GM12878 (cell line): ENCODE measurements at regions of chr17 and their contacts with region 1.

Region 1: DNA sequence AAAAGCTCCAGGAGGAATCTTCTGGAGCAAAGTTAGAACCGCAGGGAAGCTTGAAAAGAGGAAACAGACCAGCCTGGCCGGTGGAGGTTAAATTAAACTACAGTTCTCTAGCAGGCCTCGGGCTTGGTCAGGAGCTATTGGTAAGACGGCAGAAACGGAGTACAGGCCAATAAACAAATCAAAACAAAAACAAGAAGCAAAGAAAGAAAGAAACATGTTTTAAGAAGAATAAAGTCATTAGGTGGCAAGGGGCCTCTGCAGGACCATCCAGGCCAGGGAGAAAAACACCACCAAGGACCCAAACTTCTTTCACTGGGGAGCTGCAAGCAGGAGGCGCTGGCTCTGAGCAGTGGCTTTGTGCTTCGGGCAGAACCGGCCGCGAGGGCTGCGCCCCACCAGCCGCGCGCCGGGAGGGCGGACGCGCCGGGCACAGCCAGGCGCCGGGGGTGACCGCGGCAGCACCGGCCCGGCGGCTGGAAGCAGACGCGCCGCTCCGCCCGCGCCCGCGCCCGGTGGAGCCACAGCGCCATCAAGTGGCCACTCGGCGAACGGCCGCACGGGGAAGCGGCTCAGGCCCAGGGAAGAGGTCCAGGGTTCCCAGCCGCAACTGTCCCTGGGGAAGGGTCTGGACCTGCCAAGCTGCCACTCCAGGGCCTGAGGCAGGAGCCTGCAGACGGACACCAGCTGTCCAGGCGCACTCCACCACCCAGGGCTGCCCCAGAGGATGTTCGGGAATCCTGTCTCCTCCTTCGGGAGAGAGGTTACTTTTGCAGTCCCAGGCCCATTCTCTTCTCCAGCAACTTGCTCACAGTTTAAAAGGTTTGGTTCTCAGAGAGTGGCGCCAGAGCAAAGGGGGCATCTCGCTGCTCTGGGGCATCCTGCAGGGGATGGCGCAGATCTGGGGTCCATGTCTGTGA is 419.4 kb downstream of the SOX9 start:
- DNase-seq: no peak
- ATAC-seq: peak; percentile 99
- H3K4me3 ChIP-seq: no peak overlapping the region
- H3K27ac ChIP-seq: no peak overlapping the region
- H3K4me1 ChIP-seq: peaks cover 5% of the 10 kb centered on the region
- H3K27me3 ChIP-seq: no peaks in the 10 kb centered on the region
- CTCF ChIP-seq: peak; percentile 68 to 94 (median 84)
- EP300 ChIP-seq: 0 out of 4 replicates have a peak, but pooled peaks have one; percentile 7 to 25
- POLR2A ChIP-seq: no peak
- RAD21 ChIP-seq: peak; percentile 90

Region 2: DNA sequence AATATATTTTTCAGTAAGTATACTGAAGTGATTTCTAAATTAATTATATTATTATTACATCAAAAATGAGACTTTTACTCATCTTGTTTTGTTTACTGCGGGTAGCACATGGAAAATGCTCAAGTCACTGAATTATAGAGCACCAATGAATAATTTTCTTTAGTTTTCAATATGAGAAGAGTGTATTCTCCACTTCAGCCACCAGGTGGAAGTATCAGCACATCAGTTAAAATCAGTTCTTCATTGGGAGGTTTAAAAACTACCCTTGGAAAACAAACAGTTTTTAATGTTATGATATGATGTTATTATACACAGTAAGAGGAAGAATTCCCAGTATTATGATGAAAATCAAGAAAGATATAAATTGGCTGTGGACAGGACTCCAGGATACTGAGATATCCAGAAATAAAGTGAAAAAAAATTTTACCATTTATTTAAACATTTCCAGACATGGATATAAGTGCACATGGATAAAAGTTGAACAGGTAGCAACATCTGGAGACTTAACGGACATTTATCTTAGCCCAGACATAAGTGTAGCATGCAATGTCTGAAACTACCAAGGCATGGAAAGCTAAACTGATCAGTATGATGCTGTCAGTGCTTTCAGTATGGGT is 1903.6 kb before region 1 on chr17:
- CTCF ChIA-PET with region 1: no interaction called
- POLR2A ChIA-PET with region 1: no interaction called
- RAD21 ChIA-PET with region 1: no interaction called
- SMC1A ChIA-PET with region 1: no interaction called
- in situ Hi-C with region 1: loop called (anchors 5 kb)
- intact Hi-C with region 1: loop called (anchors 5 kb)
- DNase-seq: no peak
- ATAC-seq: peak; percentile 33; the same call in 1 of the 3 replicates
- H3K4me3 ChIP-seq: no peak overlapping the region
- H3K27ac ChIP-seq: no peak overlapping the region
- H3K4me1 ChIP-seq: no peaks in the 10 kb centered on the region
- H3K27me3 ChIP-seq: no peaks in the 10 kb centered on the region
- CTCF ChIP-seq: peak; percentile 53 to 70 (median 56); a peak in 5 of 6 replicates
- EP300 ChIP-seq: no peak
- POLR2A ChIP-seq: no peak
- RAD21 ChIP-seq: peak; percentile 78

Region 3: GRCh38 chr17:71472809-71473789 is 1067.1 kb before region 1 on chr17:
- CTCF ChIA-PET with region 1: interaction called, 34 read pairs
- POLR2A ChIA-PET with region 1: no interaction called
- RAD21 ChIA-PET with region 1: interaction called, 14 read pairs
- SMC1A ChIA-PET with region 1: interaction called, 19 read pairs
- in situ Hi-C with region 1: loop called (anchors 5 kb)
- intact Hi-C with region 1: loop called (anchors 1 kb)
- DNase-seq: no peak
- ATAC-seq: peak; percentile 89
- H3K4me3 ChIP-seq: no peak overlapping the region
- H3K27ac ChIP-seq: no peak overlapping the region
- H3K4me1 ChIP-seq: no peaks in the 10 kb centered on the region
- H3K27me3 ChIP-seq: no peaks in the 10 kb centered on the region
- CTCF ChIP-seq: peak; percentile 61 to 76 (median 70); a peak in 5 of 6 replicates
- EP300 ChIP-seq: no peak
- POLR2A ChIP-seq: no peak
- RAD21 ChIP-seq: peak; percentile 84

Region 4: GRCh38 chr17:72370819-72371218 is 169.4 kb before region 1 on chr17:
- CTCF ChIA-PET with region 1: interaction called, 7 read pairs
- POLR2A ChIA-PET with region 1: interaction called, 15 read pairs
- RAD21 ChIA-PET with region 1: no interaction called
- SMC1A ChIA-PET with region 1: interaction called, 4 read pairs
- in situ Hi-C with region 1: no loop called
- intact Hi-C with region 1: no loop called
- DNase-seq: no peak
- ATAC-seq: no peak
- H3K4me3 ChIP-seq: no peak overlapping the region
- H3K27ac ChIP-seq: no peak overlapping the region
- H3K4me1 ChIP-seq: no peaks in the 10 kb centered on the region
- H3K27me3 ChIP-seq: no peaks in the 10 kb centered on the region
- CTCF ChIP-seq: no peak
- EP300 ChIP-seq: no peak
- POLR2A ChIP-seq: no peak
- RAD21 ChIP-seq: no peak

Region 5: DNA sequence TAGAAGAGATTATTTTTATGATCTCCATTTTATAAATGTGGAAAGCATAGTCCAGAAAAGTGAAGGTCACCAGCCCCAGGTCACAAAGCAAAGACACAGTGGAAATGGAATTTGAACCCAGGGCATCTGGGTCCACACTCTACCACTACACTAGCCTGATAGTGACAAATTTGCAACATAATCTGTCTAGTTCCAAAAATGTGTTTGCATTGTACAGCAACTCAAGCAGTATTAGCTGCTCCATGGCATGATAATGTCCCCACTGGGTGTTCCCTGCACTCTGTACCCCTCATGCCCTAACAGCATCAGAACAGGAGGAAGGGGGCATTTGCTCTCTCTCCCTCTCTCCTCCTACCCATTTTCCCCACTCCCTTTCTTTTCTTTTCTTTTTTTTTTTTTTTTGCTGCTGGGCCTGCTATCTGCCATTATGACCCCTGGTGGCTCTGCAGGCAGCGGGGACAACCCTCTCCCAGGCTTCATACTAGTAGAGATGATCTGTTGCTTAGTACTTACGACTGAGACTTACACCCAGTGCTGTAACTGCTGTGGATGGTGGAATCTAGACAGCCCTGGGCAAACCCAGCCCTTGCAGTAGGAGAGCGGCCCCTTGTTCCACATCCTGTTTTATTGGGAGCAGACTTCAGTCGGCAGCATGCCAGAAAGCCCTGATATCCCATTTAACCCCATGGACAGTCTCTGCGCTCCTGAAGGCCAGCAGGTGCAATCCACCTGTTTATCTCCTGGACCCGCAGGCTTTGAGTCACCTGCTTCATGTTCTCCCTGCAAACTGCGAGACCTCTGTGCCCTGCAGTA is 113.1 kb before region 1 on chr17:
- CTCF ChIA-PET with region 1: interaction called, 26 read pairs
- POLR2A ChIA-PET with region 1: interaction called, 6 read pairs
- RAD21 ChIA-PET with region 1: interaction called, 48 read pairs
- SMC1A ChIA-PET with region 1: interaction called, 75 read pairs
- in situ Hi-C with region 1: no loop called
- intact Hi-C with region 1: no loop called
- DNase-seq: no peak
- ATAC-seq: no peak
- H3K4me3 ChIP-seq: no peak overlapping the region
- H3K27ac ChIP-seq: peak overlapping the region; percentile 21; the same call in 1 of the 2 replicates
- H3K4me1 ChIP-seq: peaks cover 33% of the 10 kb centered on the region
- H3K27me3 ChIP-seq: no peaks in the 10 kb centered on the region
- CTCF ChIP-seq: no peak
- EP300 ChIP-seq: no peak
- POLR2A ChIP-seq: no peak
- RAD21 ChIP-seq: no peak; the same call in 1 of the 2 replicates

Region 6: DNA sequence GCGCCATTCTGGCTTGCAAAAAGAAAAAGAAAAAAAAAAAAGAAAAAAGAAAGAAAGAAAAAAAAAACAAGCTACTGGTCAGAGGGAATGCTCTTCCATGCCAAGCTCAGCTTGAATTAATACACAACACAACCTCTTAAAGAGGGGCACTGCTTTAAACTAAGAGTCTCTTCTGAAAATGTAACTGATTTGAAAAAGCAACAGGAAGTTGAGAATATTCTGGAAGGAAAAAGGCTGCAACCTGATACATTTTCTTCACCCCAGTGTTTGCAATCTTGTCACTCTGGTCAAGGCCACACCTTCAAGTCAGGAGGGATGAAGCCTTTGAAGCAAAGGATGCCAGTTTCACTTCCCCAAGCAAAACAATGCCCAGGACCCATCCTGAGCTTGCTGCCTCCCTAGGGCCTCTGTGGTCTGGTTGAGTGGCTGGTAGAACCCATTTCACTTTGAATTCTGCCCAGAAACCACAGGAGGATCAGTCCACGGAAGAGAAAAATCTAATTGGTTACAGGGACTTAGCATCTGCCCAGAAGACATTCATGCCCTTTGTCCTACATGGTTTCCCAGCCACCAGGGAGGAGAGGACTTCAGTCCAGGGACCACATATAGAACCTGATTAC is 29.7 kb before region 1 on chr17:
- CTCF ChIA-PET with region 1: interaction called, 23 read pairs
- POLR2A ChIA-PET with region 1: interaction called, 13 read pairs
- RAD21 ChIA-PET with region 1: interaction called, 50 read pairs
- SMC1A ChIA-PET with region 1: interaction called, 66 read pairs
- in situ Hi-C with region 1: no loop called
- intact Hi-C with region 1: no loop called
- DNase-seq: peak; percentile 92
- ATAC-seq: peak; percentile 80
- H3K4me3 ChIP-seq: no peak overlapping the region
- H3K27ac ChIP-seq: no peak overlapping the region
- H3K4me1 ChIP-seq: peaks cover 15% of the 10 kb centered on the region
- H3K27me3 ChIP-seq: no peaks in the 10 kb centered on the region
- CTCF ChIP-seq: no peak
- EP300 ChIP-seq: peak in 1 of 2 experiments; percentile 69; a peak in 1 of 4 replicates
- POLR2A ChIP-seq: no peak
- RAD21 ChIP-seq: no peak

Region 7: DNA sequence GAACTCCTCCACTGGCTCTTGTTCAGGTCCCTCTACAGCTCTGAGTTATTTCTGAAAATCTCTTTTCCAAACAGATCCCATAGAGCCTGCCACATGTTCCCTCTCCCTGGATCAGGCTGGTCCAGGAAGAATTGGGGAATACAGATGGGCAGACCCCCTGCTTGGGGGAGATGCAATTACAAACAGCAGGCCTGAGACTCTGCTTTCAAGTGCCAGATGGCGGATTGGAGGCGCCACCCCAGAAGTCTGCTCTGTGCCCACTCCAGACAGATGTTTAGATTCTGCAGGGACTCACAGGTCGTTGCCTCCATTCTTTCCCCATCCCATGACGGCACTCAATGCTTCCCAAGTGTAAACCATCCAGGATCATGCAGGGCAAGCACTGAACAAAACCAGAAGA is 235.7 kb after region 1 on chr17:
- CTCF ChIA-PET with region 1: no interaction called
- POLR2A ChIA-PET with region 1: no interaction called
- RAD21 ChIA-PET with region 1: no interaction called
- SMC1A ChIA-PET with region 1: no interaction called
- in situ Hi-C with region 1: no loop called
- intact Hi-C with region 1: no loop called
- DNase-seq: no peak
- ATAC-seq: no peak
- H3K4me3 ChIP-seq: no peak overlapping the region
- H3K27ac ChIP-seq: no peak overlapping the region
- H3K4me1 ChIP-seq: no peaks in the 10 kb centered on the region
- H3K27me3 ChIP-seq: no peaks in the 10 kb centered on the region
- CTCF ChIP-seq: no peak
- EP300 ChIP-seq: no peak
- POLR2A ChIP-seq: no peak
- RAD21 ChIP-seq: no peak